ENCODE measurements at regions of chr1 and their contacts with region 1.

Region 1: DNA sequence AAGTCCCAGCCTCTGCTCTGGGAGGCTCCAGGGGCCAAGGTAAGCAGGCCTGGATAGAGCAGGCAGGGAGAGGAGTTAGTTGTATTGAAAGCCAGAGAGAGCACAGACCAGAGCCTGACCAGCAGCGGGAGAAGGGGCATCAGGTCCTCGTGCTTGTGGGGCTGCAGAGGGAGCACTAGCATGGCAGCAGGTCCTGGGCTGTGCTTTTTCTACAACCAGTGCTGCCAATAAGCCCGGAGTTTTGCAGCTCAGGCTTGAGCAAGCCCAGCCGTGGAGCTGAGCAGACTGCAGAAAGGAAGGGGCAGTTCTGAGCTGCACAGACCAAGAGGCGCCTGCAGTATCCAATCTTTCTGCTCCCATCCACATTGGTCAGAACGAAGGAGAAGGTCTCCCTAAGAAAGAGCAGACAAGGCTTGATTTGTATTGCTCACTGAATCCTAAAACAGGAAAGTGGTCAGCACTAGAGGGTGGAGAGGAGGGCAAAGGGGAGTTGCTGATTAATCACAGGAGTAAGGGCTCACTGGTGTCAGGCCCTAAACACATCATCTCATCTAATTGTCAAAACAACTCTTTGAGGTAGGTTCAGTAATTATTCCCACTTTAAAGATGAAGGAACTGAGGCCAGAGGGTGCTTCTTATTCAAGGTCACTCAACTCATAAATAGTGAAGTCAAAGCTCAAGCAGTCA is 2.7 kb downstream of the DENND2D start:
- DNase-seq: peak; percentile 54 to 90 (median 73)
- ATAC-seq: peak; percentile 47
- H3K4me3 ChIP-seq: peak overlapping the region; percentile 74 to 93
- H3K4me3 Mint-ChIP-seq: peak overlapping the region; percentile 94
- H3K27ac ChIP-seq: peak overlapping the region; percentile 55 to 84
- H3K27ac Mint-ChIP-seq: peak overlapping the region; percentile 97
- H3K4me1 ChIP-seq: peaks cover 62% of the 10 kb centered on the region
- H3K4me1 Mint-ChIP-seq: peaks cover 75% of the 10 kb centered on the region
- H3K27me3 ChIP-seq: no peaks in the 10 kb centered on the region
- H3K27me3 Mint-ChIP-seq: no peaks in the 10 kb centered on the region
- CTCF ChIP-seq: no peak

Region 2: DNA sequence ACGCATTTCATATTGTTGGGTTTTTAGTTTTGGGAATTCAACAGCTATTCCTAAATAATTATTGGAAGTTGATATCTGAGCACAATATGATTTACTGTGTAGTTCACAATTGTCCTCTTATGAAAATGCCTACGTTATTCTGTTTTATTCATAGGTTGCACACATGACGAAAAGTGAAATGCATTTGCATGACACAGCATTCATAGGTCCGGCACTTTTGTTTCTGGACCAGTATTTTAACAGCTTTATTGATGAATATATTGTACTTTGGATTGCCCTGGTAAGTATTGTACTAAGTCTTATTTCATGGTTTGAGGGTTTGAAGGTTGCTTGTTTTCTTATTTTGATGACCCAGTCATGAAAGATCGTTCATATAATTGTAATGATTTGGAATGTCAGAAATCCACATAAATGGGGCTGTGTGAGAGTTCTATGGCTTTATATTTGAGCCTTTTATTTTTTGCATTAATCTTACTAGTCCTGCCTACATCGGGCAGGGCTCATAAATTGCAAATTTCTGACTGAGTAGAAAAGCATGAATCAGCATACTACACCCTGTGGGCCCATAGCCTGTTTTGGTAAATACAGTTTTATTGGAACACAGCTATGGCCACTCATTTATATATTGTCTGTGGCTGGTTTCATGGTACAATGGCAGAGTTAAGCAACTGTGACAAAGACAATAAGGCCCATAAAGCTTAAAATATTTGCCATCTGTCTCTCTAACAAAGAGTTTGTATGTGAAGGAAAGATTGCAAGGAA is 14.3 kb before region 1 on chr1:
- CTCF ChIA-PET with region 1: interaction called, 13 read pairs
- POLR2A ChIA-PET with region 1: interaction called, 66 read pairs
- intact Hi-C with region 1: loop called in 1 of 2 experiments (anchors 1 kb)
- DNase-seq: no peak
- ATAC-seq: no peak
- H3K4me3 ChIP-seq: no peak overlapping the region
- H3K4me3 Mint-ChIP-seq: no peak overlapping the region
- H3K27ac ChIP-seq: peak overlapping the region in 1 of 2 experiments; percentile 38
- H3K27ac Mint-ChIP-seq: peak overlapping the region; percentile 64
- H3K4me1 ChIP-seq: peaks cover 63% of the 10 kb centered on the region
- H3K4me1 Mint-ChIP-seq: peaks cover 89% of the 10 kb centered on the region
- H3K27me3 ChIP-seq: no peaks in the 10 kb centered on the region
- H3K27me3 Mint-ChIP-seq: no peaks in the 10 kb centered on the region
- CTCF ChIP-seq: no peak

Region 3: DNA sequence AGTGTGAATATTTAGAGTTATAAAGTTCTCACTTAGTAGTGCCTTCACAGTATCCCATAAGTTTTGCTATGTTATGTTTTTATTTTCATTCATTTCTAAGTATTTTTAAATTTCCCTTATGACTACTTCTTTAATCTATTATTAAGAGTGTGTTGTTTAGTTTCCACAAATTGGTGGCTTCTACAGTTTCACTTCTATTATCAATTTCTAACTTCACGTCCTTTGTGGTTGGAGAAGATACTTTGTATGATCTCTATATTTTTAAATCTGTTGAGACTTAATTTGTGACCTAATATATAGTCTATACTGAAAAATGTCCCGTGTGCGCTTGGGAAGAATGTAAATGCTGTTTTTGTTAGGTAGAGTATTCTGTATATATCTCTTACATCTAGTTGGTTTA is 104.6 kb after region 1 on chr1:
- CTCF ChIA-PET with region 1: no interaction called
- POLR2A ChIA-PET with region 1: no interaction called
- intact Hi-C with region 1: no loop called
- DNase-seq: no peak
- ATAC-seq: no peak
- H3K4me3 ChIP-seq: no peak overlapping the region
- H3K4me3 Mint-ChIP-seq: no peak overlapping the region
- H3K27ac ChIP-seq: no peak overlapping the region
- H3K27ac Mint-ChIP-seq: no peak overlapping the region
- H3K4me1 ChIP-seq: no peaks in the 10 kb centered on the region
- H3K4me1 Mint-ChIP-seq: no peaks in the 10 kb centered on the region
- H3K27me3 ChIP-seq: no peaks in the 10 kb centered on the region
- H3K27me3 Mint-ChIP-seq: no peaks in the 10 kb centered on the region
- CTCF ChIP-seq: no peak

Region 4: DNA sequence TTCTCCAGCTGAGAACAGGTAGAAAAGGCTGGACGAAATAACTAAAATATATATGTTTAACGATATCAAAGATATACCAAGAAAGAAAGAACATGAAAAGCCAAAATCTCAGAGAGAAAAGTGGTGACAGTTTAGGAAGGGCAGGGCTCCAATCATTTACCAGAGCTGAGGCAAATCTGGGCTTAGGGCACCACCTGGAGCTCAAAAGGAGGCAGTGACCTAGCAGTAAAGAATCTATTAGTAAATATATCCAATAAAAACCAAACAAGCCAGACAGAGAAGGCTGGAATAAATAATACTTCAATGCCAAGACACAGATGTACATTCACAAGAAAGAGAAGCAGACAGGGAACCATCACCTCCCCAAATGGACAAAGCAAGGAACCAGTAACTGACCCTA is 136.4 kb after region 1 on chr1:
- CTCF ChIA-PET with region 1: interaction called, 67 read pairs
- POLR2A ChIA-PET with region 1: interaction called, 4 read pairs
- intact Hi-C with region 1: loop called (anchors 1 kb)
- DNase-seq: peak; percentile 19 to 82 (median 57)
- ATAC-seq: peak; percentile 87
- H3K4me3 ChIP-seq: no peak overlapping the region
- H3K4me3 Mint-ChIP-seq: no peak overlapping the region
- H3K27ac ChIP-seq: no peak overlapping the region
- H3K27ac Mint-ChIP-seq: no peak overlapping the region
- H3K4me1 ChIP-seq: no peaks in the 10 kb centered on the region
- H3K4me1 Mint-ChIP-seq: peaks cover 6% of the 10 kb centered on the region
- H3K27me3 ChIP-seq: no peaks in the 10 kb centered on the region
- H3K27me3 Mint-ChIP-seq: no peaks in the 10 kb centered on the region
- CTCF ChIP-seq: peak; percentile 73

Region 5: DNA sequence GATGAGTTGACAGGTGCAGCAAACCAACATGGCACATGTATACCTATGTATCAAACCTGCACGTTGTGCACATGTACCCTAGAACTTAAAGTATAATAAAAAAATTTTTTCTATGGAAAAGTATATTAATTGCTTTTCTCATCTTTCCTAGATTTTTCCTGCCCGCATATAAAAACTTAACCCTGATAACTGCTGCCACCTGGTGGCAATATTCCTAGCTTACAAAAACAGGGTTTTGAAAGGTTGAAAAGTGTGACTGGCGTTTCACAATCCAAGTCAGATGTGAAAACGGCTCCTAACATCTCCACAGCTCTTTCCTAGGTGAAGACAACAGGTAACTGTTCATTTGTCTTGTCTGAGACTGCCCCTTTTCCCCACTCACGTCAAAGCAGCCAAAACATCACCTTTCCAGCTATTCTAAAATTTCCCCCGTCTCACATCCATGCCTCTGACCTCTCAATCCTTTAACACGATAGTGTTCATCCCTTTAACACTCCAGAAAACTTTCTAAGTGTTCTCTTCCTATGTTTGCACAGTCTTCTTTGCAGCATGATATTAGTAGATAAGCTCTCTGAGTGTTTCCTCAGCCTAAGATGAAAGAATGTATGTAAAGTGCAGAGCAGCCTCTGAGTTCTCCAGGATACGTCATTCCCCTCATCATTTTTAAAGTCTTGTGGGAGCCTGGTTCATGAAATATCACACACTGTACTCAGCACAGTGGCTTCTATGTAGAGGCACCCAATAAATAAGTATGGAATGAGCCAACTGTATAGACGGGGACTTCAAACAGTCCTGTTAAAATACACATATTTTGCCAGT is 202.3 kb after region 1 on chr1:
- CTCF ChIA-PET with region 1: interaction called, 37 read pairs
- POLR2A ChIA-PET with region 1: no interaction called
- intact Hi-C with region 1: no loop called
- DNase-seq: peak in 8 of 9 experiments; percentile 24 to 68 (median 52)
- ATAC-seq: no peak
- H3K4me3 ChIP-seq: no peak overlapping the region
- H3K4me3 Mint-ChIP-seq: no peak overlapping the region
- H3K27ac ChIP-seq: no peak overlapping the region
- H3K27ac Mint-ChIP-seq: no peak overlapping the region
- H3K4me1 ChIP-seq: no peaks in the 10 kb centered on the region
- H3K4me1 Mint-ChIP-seq: peaks cover 12% of the 10 kb centered on the region
- H3K27me3 ChIP-seq: no peaks in the 10 kb centered on the region
- H3K27me3 Mint-ChIP-seq: no peaks in the 10 kb centered on the region
- CTCF ChIP-seq: peak; percentile 65

Region 6: GRCh38 chr1:111448918-111449702 is 251.4 kb after region 1 on chr1 and contains the starts of genes ATP5PB and WDR77:
- CTCF ChIA-PET with region 1: no interaction called
- POLR2A ChIA-PET with region 1: interaction called, 6 read pairs
- intact Hi-C with region 1: loop called (anchors 5 kb)
- DNase-seq: peak; percentile 75 to 98 (median 89)
- ATAC-seq: peak; percentile 94
- H3K4me3 ChIP-seq: peak within 1 kb of the TSS; percentile 77 to 86
- H3K4me3 Mint-ChIP-seq: peak within 1 kb of the TSS; percentile 99
- H3K27ac ChIP-seq: peak within 1 kb of the TSS; percentile 75 to 83
- H3K27ac Mint-ChIP-seq: peak within 1 kb of the TSS; percentile 98
- H3K4me1 ChIP-seq: peaks cover 58% of the 10 kb centered on the region
- H3K4me1 Mint-ChIP-seq: peaks cover 84% of the 10 kb centered on the region
- H3K27me3 ChIP-seq: no peaks in the 10 kb centered on the region
- H3K27me3 Mint-ChIP-seq: no peaks in the 10 kb centered on the region
- CTCF ChIP-seq: no peak
- total RNA-seq, gene ATP5PB: 59.9 to 64.6 TPM
- total RNA-seq, gene WDR77: 9.5 to 11.4 TPM